Activated CD4-positive, alpha-beta T cell treated with anti-CD3 and anti-CD28 coated beads, Interleukin-2, amount 10 ng/mL, durations not matched to agents 24 days and 14 days (primary cell): ENCODE measurements at regions of chr16 and their contacts with region 1.

Region 1: DNA sequence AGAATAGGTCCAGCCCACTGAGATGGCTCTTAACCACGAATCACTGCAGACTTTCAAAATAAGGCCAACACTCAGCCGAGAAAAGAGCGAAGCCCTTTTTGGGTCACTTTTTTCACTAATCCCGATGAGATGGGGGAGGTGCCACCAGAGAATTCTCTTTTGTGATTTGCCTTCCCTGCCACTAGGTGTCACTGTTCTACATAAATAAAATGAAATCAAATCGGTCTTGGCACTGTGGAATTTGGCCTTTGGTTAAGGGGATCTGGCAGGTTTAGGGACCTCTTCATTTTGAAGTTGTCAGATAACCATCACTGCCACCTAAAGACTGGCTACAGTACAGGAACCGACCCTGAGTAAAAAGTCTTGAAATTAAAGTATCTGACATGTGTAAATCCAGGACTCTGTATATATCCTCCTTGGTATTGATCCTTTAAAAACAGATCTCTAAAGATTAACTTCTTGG is 147.0 kb downstream of the HS3ST4 start:
- DNase-seq: peak; percentile 78
- H3K4me3 Mint-ChIP-seq: no peak overlapping the region
- H3K27ac Mint-ChIP-seq: no peak overlapping the region
- H3K4me1 Mint-ChIP-seq: peaks cover 2% of the 10 kb centered on the region
- H3K27me3 Mint-ChIP-seq: peaks cover 11% of the 10 kb centered on the region

Region 2: GRCh38 chr16:26569793-26570192 is 731.0 kb after region 1 on chr16:
- intact Hi-C with region 1: loop called (anchors 5 kb)
- DNase-seq: peak; percentile 78
- H3K4me3 Mint-ChIP-seq: no peak overlapping the region
- H3K27ac Mint-ChIP-seq: no peak overlapping the region
- H3K4me1 Mint-ChIP-seq: peaks cover 9% of the 10 kb centered on the region
- H3K27me3 Mint-ChIP-seq: peaks cover 15% of the 10 kb centered on the region

Region 3: DNA sequence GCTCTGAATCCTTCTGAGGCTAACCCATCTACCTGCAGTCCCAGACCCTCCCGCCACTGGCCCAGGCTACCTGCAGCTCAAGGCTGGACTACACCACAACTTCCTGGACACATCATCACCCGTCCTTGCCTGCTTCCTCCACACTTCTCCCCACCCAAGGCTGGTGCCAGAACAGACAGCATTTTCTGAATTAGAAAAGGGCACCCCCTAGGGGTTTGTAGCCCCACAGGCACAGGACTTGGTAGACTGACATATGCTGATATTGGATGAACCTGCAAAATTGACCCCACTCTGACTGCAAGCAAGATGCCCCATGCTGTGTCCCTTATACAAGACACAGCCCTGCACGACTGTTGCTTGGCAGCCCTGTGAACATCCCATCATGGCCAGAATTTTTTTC is 956.4 kb after region 1 on chr16:
- intact Hi-C with region 1: loop called (anchors 10 kb)
- DNase-seq: peak; percentile 81
- H3K4me3 Mint-ChIP-seq: peak overlapping the region; percentile 15
- H3K27ac Mint-ChIP-seq: no peak overlapping the region
- H3K4me1 Mint-ChIP-seq: peaks cover 12% of the 10 kb centered on the region
- H3K27me3 Mint-ChIP-seq: peaks cover 8% of the 10 kb centered on the region

Region 4: DNA sequence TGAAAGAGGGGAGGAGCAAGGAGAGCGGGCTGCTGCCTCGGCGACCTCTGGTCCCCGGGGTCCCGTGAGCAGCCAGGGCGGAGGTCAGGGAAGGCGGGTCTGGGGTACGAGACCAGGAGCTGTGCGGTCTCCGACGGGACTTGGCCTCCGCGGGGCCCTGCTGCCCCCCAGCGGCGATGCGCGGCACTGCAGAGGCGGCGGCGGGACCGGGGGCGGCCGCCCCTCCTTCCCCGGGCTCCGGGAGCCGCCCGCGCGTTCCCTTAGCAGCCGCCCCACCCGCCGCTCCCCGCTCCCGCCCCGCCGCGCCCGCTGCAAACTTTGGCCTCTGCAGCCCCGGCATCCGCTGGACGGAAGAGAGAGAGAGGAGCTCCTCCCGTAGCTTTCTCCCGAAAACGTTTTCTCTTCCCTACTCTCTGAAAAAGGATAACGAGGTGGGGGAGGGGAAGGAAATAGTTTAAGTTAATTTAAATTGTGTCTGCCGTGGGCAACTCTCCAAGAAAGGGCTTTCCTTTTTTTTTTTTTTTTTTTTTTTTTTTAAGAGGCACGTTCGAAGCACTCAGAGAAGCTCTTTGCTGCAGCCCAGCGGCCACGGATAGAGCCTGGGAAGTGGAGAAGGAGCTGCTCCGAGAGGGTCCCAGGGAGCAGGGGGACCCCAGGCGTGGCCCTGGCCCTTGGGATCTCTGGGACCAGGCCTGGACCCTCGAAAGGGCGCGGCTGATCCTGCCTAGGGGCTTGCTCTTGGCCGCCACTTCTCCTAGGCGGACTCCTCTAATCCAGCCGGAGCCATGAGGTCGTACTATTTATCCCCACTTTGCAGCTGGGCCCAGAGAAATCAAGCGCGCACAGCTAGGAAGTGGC is 1271.1 kb after region 1 on chr16:
- intact Hi-C with region 1: loop called (anchors 2 kb)
- DNase-seq: peak; percentile 95
- H3K4me3 Mint-ChIP-seq: peak overlapping the region; percentile 80
- H3K27ac Mint-ChIP-seq: no peak overlapping the region
- H3K4me1 Mint-ChIP-seq: peaks cover 2% of the 10 kb centered on the region
- H3K27me3 Mint-ChIP-seq: peaks cover 7% of the 10 kb centered on the region